Natural killer cell (primary cell): ENCODE measurements at regions of chr4 and their contacts with region 1.

Region 1: GRCh38 chr4:46844325-46844917 is 64.6 kb downstream of the COX7B2 start:
- DNase-seq: peak in 1 of 2 donors; percentile 66
- ATAC-seq: peak; percentile 52 to 67 (median 61)
- H3K4me3 ChIP-seq: no peak overlapping the region
- H3K4me3 Mint-ChIP-seq: no peak overlapping the region
- H3K27ac ChIP-seq: no peak overlapping the region
- H3K27ac Mint-ChIP-seq: no peak overlapping the region
- H3K4me1 ChIP-seq: peaks cover under 1% of the 10 kb centered on the region
- H3K4me1 Mint-ChIP-seq: peaks cover 15 to 16% of the 10 kb centered on the region in 2 donors
- H3K27me3 ChIP-seq: no peaks in the 10 kb centered on the region
- H3K27me3 Mint-ChIP-seq: no peaks in the 10 kb centered on the region
- CTCF ChIP-seq: peak; percentile 86

Region 2: GRCh38 chr4:47032415-47033106 is 188.1 kb after region 1 on chr4:
- intact Hi-C with region 1: loop called (anchors 5 kb)
- DNase-seq: peak; percentile 31 to 51
- ATAC-seq: peak; percentile 76 to 93 (median 88)
- H3K4me3 ChIP-seq: peak overlapping the region; percentile 13
- H3K4me3 Mint-ChIP-seq: peak overlapping the region; percentile 70
- H3K27ac ChIP-seq: no peak overlapping the region
- H3K27ac Mint-ChIP-seq: peak overlapping the region in 1 of 2 donors; percentile 39
- H3K4me1 ChIP-seq: peaks cover 21% of the 10 kb centered on the region
- H3K4me1 Mint-ChIP-seq: peaks cover 19 to 20% of the 10 kb centered on the region in 2 donors
- H3K27me3 ChIP-seq: peaks cover 38% of the 10 kb centered on the region
- H3K27me3 Mint-ChIP-seq: peaks cover 29 to 70% of the 10 kb centered on the region in 2 donors
- CTCF ChIP-seq: peak; percentile 56

Region 3: DNA sequence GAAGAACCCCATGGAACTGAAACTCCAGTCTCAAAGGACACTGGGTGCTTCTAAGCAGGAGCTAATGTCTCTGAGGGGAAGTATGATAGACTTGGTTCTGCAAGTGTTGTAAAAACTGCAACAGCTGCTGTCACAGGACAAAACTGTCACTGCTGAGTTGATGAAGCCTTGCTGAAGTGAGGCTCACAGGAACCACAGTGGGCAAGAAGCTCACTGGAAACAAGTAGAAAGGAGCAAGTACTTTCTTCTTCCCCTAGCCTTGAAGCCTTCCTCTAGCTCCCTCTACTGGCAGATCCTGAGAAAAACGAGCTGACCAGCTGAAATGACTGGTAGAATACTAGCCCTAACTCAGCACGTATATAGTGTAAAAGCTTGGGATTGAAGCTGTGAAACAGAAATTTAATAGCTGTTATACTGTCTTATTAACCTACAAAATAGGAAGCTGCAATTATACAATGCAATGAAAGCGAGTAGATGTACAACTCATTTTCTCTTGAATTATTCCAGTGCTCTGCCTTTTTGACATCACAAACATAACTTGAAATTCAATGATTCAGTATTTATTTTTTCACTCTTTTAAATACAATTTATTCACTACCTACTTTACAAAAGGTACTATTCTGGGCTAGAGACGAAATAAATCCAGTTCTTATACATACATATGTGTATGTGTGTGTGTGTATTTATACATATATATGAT is 278.3 kb after region 1 on chr4:
- intact Hi-C with region 1: loop called (anchors 1 kb)
- DNase-seq: peak; percentile 18 to 61
- ATAC-seq: peak; percentile 60 to 73 (median 66)
- H3K4me3 ChIP-seq: no peak overlapping the region
- H3K4me3 Mint-ChIP-seq: no peak overlapping the region
- H3K27ac ChIP-seq: no peak overlapping the region
- H3K27ac Mint-ChIP-seq: no peak overlapping the region
- H3K4me1 ChIP-seq: no peaks in the 10 kb centered on the region
- H3K4me1 Mint-ChIP-seq: peaks cover 0 to 5% of the 10 kb centered on the region in 2 donors
- H3K27me3 ChIP-seq: no peaks in the 10 kb centered on the region
- H3K27me3 Mint-ChIP-seq: no peaks in the 10 kb centered on the region
- CTCF ChIP-seq: peak; percentile 81

Region 4: GRCh38 chr4:47383829-47384427 is 539.5 kb after region 1 on chr4:
- intact Hi-C with region 1: loop called (anchors 2 kb)
- DNase-seq: peak in 1 of 2 donors; percentile 45
- ATAC-seq: peak in 1 of 3 donors; percentile 48
- H3K4me3 ChIP-seq: no peak overlapping the region
- H3K4me3 Mint-ChIP-seq: no peak overlapping the region
- H3K27ac ChIP-seq: no peak overlapping the region
- H3K27ac Mint-ChIP-seq: no peak overlapping the region
- H3K4me1 ChIP-seq: no peaks in the 10 kb centered on the region
- H3K4me1 Mint-ChIP-seq: no peaks in the 10 kb centered on the region
- H3K27me3 ChIP-seq: no peaks in the 10 kb centered on the region
- H3K27me3 Mint-ChIP-seq: peaks cover 13 to 16% of the 10 kb centered on the region in 2 donors
- CTCF ChIP-seq: peak; percentile 68